Colonic mucosa (tissue), 4 donors: ENCODE measurements at regions of chr5 and their contacts with region 1.

Region 1: DNA sequence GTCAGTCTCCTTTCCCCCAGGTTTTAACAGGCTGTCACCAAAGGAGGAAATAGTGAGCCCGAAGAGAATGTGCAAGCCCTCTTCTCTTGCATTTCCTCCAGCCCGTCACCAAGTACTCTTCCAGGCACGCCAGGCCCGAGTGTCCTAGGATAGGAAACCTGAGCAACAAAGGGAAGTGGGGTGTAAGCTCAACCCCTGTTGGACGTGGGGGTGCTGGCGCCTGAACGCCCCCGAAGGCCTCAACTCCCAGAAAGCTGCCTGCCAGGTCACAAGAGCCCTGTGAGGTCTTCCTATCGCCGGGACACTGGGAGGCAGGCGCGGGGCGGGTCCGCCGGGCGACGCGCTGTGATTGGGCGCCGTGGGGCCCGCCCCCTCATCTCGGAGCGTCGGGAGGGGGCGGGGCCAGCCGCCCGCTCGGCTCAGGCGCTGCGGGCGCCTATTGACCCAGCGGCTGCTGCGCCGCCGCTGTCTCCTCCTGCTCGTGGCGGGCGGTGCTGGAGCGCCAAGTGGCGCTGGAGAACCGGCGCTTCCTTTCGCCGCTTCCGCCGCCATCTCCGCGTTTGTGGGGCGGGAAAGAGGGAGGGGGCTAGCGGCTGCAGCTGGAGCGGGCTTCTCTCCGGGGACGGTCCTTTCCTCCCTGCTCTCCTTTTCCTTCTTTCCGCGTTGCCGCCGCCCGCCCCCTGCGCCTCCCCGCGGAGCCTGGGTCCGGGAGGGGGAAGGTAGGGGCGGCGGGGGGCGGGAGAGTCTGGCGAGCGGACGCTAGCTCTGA is 572 bp upstream of the MAN2A1 start:
- DNase-seq: peak; percentile 90
- H3K4me3 ChIP-seq: peak overlapping the region; percentile 97
- H3K27ac ChIP-seq: peak overlapping the region; percentile 99
- H3K4me1 ChIP-seq: peaks cover 6% of the 10 kb centered on the region
- H3K27me3 ChIP-seq: no peaks in the 10 kb centered on the region
- CTCF ChIP-seq: no peak

Region 2: GRCh38 chr5:108919591-108920326 is 769.4 kb before region 1 on chr5:
- intact Hi-C with region 1: loop called (anchors 5 kb)
- DNase-seq: no peak
- H3K4me3 ChIP-seq: no peak overlapping the region
- H3K27ac ChIP-seq: no peak overlapping the region
- H3K4me1 ChIP-seq: no peaks in the 10 kb centered on the region
- H3K27me3 ChIP-seq: no peaks in the 10 kb centered on the region
- CTCF ChIP-seq: peak; percentile 26